Colonic mucosa (tissue), 4 donors: ENCODE measurements at regions of chr9 and their contacts with region 1.

Region 1: GRCh38 chr9:33813712-33814641 is 3.0 kb upstream of the UBE2R2 start:
- DNase-seq: no peak
- H3K4me3 ChIP-seq: no peak overlapping the region
- H3K27ac ChIP-seq: no peak overlapping the region
- H3K4me1 ChIP-seq: peaks cover 3% of the 10 kb centered on the region
- H3K27me3 ChIP-seq: no peaks in the 10 kb centered on the region
- CTCF ChIP-seq: peak; percentile 66

Region 2: DNA sequence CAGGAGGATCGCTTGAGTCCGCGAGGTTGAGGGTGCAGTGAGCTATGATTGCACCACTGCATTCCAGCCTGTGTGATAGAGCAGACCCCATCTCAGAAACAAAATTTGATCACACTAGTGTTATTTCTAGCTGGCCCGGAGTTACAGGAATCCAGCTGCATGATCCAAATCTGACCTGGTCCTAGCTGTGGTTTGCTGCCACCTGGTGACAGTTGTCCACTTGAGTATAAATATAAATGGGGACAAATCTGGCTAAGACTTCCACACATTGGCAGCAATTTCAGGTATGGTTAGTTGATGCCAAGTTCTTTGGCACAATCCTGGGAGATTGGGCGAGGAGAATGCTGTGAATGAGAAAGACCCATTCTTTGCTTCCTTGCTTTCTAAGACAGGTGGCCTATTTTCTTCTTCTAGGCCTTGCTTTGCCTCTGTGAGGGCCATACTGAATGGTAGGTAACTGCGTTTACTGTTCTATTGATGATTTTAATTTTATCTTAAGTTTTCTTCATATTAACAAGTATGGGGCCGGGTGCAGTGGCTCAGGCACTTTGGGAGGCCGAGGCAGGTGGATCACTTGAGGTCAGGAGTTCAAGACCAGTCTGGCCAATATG is 38.3 kb after region 1 on chr9:
- intact Hi-C with region 1: loop called (anchors 2 kb)
- DNase-seq: peak; percentile 82
- H3K4me3 ChIP-seq: no peak overlapping the region
- H3K27ac ChIP-seq: no peak overlapping the region
- H3K4me1 ChIP-seq: no peaks in the 10 kb centered on the region
- H3K27me3 ChIP-seq: no peaks in the 10 kb centered on the region
- CTCF ChIP-seq: peak; percentile 53